ENCODE measurements at regions of chr4 and their contacts with region 1.

Region 1: DNA sequence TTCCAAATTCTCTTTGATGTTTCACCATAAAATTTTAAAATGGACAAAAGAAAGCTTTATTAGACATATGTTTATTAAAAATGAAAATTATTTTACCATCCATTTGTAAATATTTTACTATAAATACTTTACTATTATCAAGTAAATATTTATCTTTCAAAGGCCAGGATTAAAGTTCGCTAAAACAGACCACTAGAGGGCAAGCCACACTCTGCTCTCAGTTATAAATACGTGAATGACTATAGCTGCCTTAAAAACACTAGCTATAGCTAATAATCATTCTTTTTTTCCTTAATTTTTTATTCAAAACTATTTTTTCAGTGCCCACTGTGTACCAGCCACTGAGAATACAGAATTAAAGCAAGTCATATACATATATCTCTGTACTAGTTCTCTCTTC is 38.6 kb downstream of the UNC5C start:
- DNase-seq: peak; percentile 20
- H3K4me3 ChIP-seq: no peak overlapping the region
- CTCF ChIP-seq: peak; percentile 62

Region 2: DNA sequence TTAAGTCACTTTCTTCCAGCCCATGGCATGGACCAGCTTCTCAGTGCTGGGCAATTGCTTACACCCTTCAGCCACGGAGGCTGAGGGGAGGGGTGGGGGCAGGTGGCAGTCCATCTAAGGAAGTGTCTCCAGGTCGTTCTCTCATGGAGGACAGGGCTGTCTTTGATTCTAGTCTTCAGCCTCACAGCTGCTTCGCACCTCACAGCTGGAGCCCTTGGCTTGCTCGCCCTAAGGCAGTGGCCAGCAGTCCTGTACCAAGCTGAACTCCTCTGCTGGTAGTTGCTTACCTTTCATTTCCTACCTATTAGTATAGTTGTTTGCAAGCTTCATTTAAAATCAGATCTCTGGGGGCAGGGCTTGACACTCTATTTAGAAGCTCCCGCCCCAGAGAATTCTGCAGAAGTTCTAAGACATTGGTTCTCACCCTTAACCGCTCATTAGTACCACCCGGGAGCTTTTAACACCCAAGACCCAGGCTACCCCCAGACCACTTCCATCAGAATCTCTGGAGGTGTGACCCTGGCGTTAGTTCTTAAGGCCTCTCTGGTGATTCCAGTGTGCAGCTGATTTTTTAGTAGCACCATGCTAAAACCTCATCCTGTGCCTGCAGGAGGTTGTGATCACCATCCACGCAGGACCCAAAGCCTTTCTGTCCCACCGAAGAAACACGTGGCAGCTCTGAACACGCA is 348.2 kb before region 1 on chr4:
- in situ Hi-C with region 1: loop called (anchors 5 kb)
- DNase-seq: no peak
- H3K4me3 ChIP-seq: no peak overlapping the region
- CTCF ChIP-seq: no peak

Region 3: DNA sequence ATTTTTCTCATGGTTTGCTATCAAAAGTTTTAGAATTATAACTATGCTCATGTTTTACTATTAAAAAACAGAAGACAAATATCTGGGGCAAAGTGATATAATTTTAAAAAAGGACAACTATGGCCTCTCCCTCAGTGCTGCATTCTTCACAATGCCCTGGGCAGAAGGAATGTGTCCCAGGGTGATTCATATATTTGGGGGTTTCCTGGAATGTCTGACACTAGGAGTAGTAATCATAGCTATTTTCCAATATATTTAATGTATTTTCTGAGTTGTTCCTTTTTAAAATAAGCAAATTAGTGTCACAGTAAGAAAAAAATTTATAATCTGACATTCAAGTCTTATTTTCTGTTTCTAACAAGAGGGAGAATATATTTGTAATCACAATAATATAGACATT is 243.1 kb before region 1 on chr4:
- in situ Hi-C with region 1: no loop called
- DNase-seq: peak; percentile 34
- H3K4me3 ChIP-seq: no peak overlapping the region
- CTCF ChIP-seq: no peak

Region 4: GRCh38 chr4:95439896-95440295 is 70.2 kb before region 1 on chr4:
- in situ Hi-C with region 1: no loop called
- DNase-seq: no peak
- H3K4me3 ChIP-seq: no peak overlapping the region
- CTCF ChIP-seq: no peak

Region 5: GRCh38 chr4:95572304-95573035 is 62.3 kb after region 1 on chr4:
- in situ Hi-C with region 1: no loop called
- DNase-seq: no peak
- H3K4me3 ChIP-seq: no peak overlapping the region
- CTCF ChIP-seq: no peak

Measured in astrocyte of the cerebellum (primary cell).